ENCODE measurements at regions of chr4 and their contacts with region 1.

Region 1: GRCh38 chr4:7101692-7102515 is 34.0 kb upstream of the GRPEL1 start:
- DNase-seq: peak; percentile 63 to 83
- H3K4me3 ChIP-seq: peak overlapping the region in 3 of 4 experiments; percentile 13 to 54 (median 29); a peak in 4 of 8 replicates
- H3K27ac ChIP-seq: no peak overlapping the region
- H3K4me1 ChIP-seq: peaks cover 0 to 12% (median 9%) of the 10 kb centered on the region in 4 experiments; a peak in 6 of 7 replicates
- H3K27me3 ChIP-seq: peaks cover 3 to 34% (median 28%) of the 10 kb centered on the region in 4 experiments
- CTCF ChIP-seq: peak in 2 of 3 experiments; percentile 57 to 85; a peak in 2 of 4 replicates
- EP300 ChIP-seq: no peak
- POLR2A ChIP-seq: no peak
- RAD21 ChIP-seq: peak; percentile 44 to 52

Region 2: GRCh38 chr4:7081891-7082471 is 19.9 kb before region 1 on chr4:
- CTCF ChIA-PET with region 1: interaction called, 65 read pairs
- POLR2A ChIA-PET with region 1: no interaction called
- DNase-seq: peak in 1 of 2 experiments; percentile 75
- H3K4me3 ChIP-seq: no peak overlapping the region
- H3K27ac ChIP-seq: no peak overlapping the region
- H3K4me1 ChIP-seq: no peaks in the 10 kb centered on the region; a peak in 1 of 7 replicates
- H3K27me3 ChIP-seq: peaks cover 0 to 14% (median 6%) of the 10 kb centered on the region in 4 experiments; a peak in 4 of 7 replicates
- CTCF ChIP-seq: peak; percentile 76 to 85 (median 78)
- EP300 ChIP-seq: no peak
- POLR2A ChIP-seq: no peak
- RAD21 ChIP-seq: peak; percentile 89 to 93

Region 3: DNA sequence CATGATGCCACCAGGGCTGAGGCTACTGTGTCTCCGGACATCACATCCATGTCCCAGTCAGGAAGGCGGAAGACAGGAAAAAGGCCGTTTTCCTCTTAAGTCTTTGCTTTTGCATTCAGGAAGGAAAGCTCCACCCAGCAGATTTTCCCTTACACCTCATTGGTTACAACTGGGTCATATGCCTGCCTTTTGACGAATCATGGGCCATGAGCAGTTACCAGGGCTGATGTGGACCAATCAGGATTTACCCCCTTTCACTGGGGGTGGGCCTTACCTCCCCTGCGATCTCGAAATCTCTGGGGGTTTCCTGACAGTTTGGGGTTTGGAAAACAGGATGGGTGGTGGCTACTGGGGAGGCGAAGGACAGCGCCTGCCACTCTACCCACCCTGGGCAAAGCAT is 18.4 kb after region 1 on chr4:
- CTCF ChIA-PET with region 1: interaction called, 15 read pairs
- POLR2A ChIA-PET with region 1: interaction called, 3 read pairs
- DNase-seq: no peak
- H3K4me3 ChIP-seq: no peak overlapping the region
- H3K27ac ChIP-seq: no peak overlapping the region
- H3K4me1 ChIP-seq: no peaks in the 10 kb centered on the region
- H3K27me3 ChIP-seq: no peaks in the 10 kb centered on the region; a peak in 1 of 7 replicates
- CTCF ChIP-seq: no peak
- EP300 ChIP-seq: no peak
- POLR2A ChIP-seq: no peak
- RAD21 ChIP-seq: no peak

Region 4: DNA sequence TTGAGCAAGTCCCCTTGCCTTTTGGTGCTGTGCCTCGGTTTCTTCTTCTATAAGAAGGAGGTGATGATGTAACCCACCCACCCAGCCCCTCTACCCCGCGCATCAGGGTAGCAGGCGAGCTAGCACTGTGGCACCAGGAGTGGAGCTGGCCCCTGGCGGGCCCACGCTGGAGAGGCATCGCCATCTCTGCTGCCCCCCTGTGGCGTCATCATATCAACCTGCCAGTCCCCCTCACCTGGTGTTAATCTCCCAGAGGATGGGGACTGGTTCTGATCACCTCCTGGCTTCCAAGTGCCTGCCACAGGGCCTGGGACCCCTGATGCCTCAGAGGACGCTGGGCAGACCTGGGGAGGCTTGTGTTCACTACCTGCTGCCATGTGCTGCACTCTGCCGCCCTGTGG is 84.2 kb after region 1 on chr4:
- CTCF ChIA-PET with region 1: interaction called, 17 read pairs
- POLR2A ChIA-PET with region 1: no interaction called
- DNase-seq: no peak
- H3K4me3 ChIP-seq: no peak overlapping the region
- H3K27ac ChIP-seq: no peak overlapping the region
- H3K4me1 ChIP-seq: no peaks in the 10 kb centered on the region
- H3K27me3 ChIP-seq: peaks cover 0 to 15% (median 5%) of the 10 kb centered on the region in 4 experiments; a peak in 4 of 7 replicates
- CTCF ChIP-seq: peak in 2 of 3 experiments; percentile 47 to 54; a peak in 3 of 4 replicates
- EP300 ChIP-seq: no peak
- POLR2A ChIP-seq: no peak
- RAD21 ChIP-seq: peak; percentile 41 to 60

Measured in H1 (cell line).